ENCODE measurements at regions of chr6 and their contacts with region 1.

Region 1: GRCh38 chr6:129498950-129499842 is 210.8 kb downstream of the ARHGAP18 start:
- DNase-seq: peak; percentile 75
- H3K4me3 ChIP-seq: peak overlapping the region; percentile 4 to 23 (median 7)
- H3K27ac ChIP-seq: peak overlapping the region; percentile 90
- H3K4me1 ChIP-seq: peaks cover 68% of the 10 kb centered on the region
- H3K27me3 ChIP-seq: no peaks in the 10 kb centered on the region
- CTCF ChIP-seq: peak; percentile 32 to 54

Region 2: DNA sequence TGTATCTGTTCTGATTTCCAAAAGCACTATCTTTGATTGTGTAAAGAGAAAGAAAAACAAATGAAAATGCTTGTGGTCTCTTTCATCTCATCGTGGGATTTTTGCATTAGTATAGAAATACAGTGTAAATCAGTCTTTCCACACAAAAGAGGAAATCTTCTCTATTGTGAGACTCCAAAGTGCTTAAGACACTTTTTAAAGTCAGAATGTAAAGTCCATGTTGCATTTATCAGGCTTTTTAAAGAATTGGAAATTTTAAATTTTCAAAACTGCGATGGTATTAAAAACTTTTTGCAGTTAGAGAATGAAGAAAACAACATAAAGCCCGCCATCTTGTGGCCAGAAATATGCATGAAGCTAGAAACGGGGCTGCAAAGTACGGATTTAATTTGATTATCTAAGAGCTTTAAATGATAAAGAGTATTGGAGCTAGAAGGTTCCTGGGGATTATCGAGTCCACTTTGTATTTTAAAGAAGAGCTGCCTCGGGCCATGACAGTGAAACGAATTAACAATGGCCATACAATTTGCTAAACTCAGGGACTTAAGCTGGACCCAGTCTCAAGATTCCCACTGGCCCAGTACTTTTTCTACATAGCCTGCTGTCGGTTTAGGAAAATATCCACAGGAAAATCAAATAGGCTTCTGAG is 128.8 kb before region 1 on chr6:
- CTCF ChIA-PET with region 1: no interaction called
- dilution Hi-C with region 1: no loop called
- in situ Hi-C with region 1: no loop called
- intact Hi-C with region 1: loop called (anchors 2 kb)
- DNase-seq: peak; percentile 24
- H3K4me3 ChIP-seq: no peak overlapping the region
- H3K27ac ChIP-seq: no peak overlapping the region
- H3K4me1 ChIP-seq: no peaks in the 10 kb centered on the region
- H3K27me3 ChIP-seq: no peaks in the 10 kb centered on the region
- CTCF ChIP-seq: peak; percentile 66 to 78

Region 3: DNA sequence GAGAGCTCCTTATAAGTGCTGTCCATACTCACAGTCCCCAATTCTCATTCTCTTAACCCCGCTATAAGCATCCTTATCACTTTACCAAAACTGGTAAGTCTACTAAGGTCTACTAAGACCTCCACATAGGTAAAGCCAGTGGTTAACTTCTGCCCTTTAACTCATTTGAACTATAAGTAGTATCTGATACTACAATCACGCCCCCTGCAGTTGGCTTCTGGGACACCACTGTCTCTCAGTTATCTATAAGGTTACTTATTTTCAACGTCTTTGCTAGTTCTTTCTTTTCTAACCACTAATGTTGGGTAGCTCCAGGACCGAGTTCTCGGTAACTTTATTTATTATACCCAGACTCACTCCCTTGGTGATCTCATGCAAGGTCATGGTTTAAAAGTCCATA is 68.2 kb after region 1 on chr6:
- CTCF ChIA-PET with region 1: interaction called, 6 read pairs
- dilution Hi-C with region 1: no loop called
- in situ Hi-C with region 1: loop called in 1 of 2 experiments (anchors 10 kb)
- intact Hi-C with region 1: loop called (anchors 1 kb)
- DNase-seq: no peak
- H3K4me3 ChIP-seq: no peak overlapping the region
- H3K27ac ChIP-seq: no peak overlapping the region
- H3K4me1 ChIP-seq: no peaks in the 10 kb centered on the region
- H3K27me3 ChIP-seq: no peaks in the 10 kb centered on the region
- CTCF ChIP-seq: peak; percentile 60 to 65

Region 4: DNA sequence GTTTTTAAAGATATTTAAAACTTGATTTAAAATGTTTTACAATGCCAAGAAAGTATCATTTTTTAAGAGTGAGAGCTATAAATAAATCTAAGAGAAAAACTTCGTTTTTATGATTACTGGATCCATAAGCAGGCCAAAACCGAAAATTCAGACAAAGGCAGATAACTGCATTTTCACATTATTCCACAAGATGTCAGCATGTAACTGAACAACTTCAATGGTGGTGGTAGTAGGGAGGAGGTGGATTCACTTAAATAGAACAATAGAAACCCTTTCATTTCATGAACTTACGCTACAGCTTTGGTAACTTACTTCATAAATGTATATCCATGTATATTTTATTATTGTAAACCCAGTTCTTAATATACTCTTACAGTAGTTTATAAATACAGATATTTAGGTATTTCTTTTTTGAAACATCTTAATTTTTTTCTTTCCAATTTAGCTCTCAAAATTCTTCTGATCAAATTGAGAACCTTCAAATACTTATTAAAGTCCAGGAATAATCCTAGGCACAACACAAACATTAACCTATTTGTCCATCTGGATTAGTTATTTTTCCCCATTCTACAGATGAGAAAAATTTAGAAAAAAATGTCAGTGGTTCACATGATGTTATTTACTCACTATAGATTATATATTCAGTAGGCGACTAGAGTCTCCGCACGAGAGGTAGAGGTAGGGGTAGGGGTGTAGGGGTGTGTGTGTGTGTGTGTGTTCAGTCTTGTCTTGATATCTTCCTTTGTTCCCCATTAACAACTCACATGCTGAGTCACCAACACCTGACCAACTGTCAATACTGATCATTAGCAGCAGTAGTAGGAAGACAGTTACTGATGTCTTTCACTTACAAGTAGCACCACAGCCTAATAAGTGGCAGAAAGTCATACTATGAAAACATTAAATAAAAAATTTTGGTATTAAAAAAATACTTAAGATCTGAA is 99.3 kb after region 1 on chr6:
- CTCF ChIA-PET with region 1: no interaction called
- dilution Hi-C with region 1: no loop called
- in situ Hi-C with region 1: no loop called
- intact Hi-C with region 1: loop called (anchors 1 kb)
- DNase-seq: peak; percentile 53
- H3K4me3 ChIP-seq: no peak overlapping the region
- H3K27ac ChIP-seq: no peak overlapping the region
- H3K4me1 ChIP-seq: peaks cover 6% of the 10 kb centered on the region
- H3K27me3 ChIP-seq: no peaks in the 10 kb centered on the region
- CTCF ChIP-seq: peak; percentile 73 to 90

Region 5: GRCh38 chr6:129730477-129731165 is 231.4 kb after region 1 on chr6:
- CTCF ChIA-PET with region 1: no interaction called
- dilution Hi-C with region 1: no loop called
- in situ Hi-C with region 1: loop called (anchors 25 kb)
- intact Hi-C with region 1: loop called (anchors 1 kb)
- DNase-seq: no peak
- H3K4me3 ChIP-seq: no peak overlapping the region
- H3K27ac ChIP-seq: peak overlapping the region; percentile 9
- H3K4me1 ChIP-seq: peaks cover 20% of the 10 kb centered on the region
- H3K27me3 ChIP-seq: no peaks in the 10 kb centered on the region
- CTCF ChIP-seq: peak; percentile 47 to 63

Region 6: DNA sequence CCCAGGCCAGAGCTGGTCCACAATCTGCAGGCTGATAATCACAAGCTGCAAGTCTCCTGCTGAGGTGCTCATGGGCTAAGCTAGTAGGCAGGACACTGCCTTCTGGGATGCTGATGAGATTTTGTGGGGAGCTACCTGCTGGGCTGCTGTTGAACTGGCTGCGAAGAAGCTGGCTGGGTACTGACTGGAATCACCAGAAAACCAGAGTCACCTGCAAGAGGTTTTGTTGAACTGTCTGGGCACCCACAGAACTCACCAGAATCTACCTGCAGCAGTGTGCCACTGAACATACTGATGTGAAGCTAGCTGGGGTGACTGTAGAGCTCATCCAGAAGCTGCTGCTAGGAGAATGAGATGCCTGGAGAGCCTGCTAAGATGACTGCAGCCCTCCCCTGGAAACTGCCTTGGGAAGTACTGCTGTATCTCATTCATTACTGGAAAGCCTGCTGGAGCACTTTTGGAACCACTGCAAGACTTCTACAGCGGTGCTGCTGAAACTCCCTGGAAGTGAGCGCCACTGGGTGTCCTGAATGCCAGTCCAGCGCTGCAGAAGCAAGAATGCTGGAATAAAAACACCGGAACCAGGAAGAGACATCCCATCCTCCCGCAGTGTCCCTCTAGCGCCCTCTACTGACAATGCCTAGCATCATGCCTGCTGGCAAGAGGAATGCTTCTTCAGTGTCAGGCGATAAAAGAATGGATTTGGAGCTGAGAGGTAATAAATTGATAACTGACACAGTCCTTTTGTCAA is 275.7 kb after region 1 on chr6:
- CTCF ChIA-PET with region 1: no interaction called
- dilution Hi-C with region 1: no loop called
- in situ Hi-C with region 1: no loop called
- intact Hi-C with region 1: loop called (anchors 1 kb)
- DNase-seq: peak; percentile 53
- H3K4me3 ChIP-seq: no peak overlapping the region
- H3K27ac ChIP-seq: no peak overlapping the region
- H3K4me1 ChIP-seq: no peaks in the 10 kb centered on the region
- H3K27me3 ChIP-seq: no peaks in the 10 kb centered on the region
- CTCF ChIP-seq: peak; percentile 99

Measured in mammary epithelial cell (primary cell).